Caco-2 (cell line): ENCODE measurements at regions of chr5 and their contacts with region 1.

Region 1: DNA sequence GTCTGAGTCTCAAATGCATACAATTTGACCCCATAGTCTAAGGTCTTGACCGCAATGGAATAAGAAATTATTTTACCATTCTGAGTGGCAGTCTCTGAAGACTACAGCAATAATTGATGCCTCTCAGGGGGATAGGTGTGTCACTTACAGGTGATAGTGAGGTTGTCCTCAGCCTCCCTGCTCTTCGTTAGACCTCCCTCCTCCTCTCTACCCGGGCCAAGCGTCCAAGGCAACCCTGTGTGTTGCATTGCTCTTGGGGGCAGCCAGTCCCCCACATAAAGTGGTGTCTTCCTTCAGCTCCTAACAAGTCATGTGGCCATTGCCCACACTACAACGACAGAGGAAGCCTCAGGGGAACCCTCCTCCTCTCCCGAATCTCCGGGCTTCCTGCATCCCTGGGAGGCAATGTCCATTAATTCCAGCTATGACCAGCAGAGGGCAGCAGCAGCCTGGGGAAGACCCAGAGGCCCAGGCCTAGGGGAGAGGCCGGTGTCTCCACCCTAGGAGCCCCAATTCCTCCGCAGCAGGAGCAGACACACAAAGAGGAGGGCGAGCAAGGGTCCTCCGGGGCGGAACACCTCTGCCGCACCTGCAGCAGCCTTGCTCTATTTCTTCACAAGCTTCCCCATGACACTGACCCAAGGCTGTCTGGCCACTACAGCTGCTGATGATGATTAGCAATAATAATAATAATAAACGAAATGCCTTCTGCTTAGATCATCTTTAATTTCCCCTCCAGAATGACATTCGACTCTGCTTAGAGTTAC is 134.8 kb downstream of the KCNIP1 start:
- DNase-seq: peak; percentile 69 to 80
- H3K4me3 ChIP-seq: no peak overlapping the region
- H3K4me3 Mint-ChIP-seq: no peak overlapping the region
- H3K27ac Mint-ChIP-seq: no peak overlapping the region
- H3K4me1 ChIP-seq: peaks cover 6% of the 10 kb centered on the region; the same call in 1 of the 2 replicates
- H3K4me1 Mint-ChIP-seq: peaks cover 17% of the 10 kb centered on the region
- H3K27me3 ChIP-seq: no peaks in the 10 kb centered on the region; the same call in 1 of the 2 replicates
- H3K27me3 Mint-ChIP-seq: peaks cover 21% of the 10 kb centered on the region
- CTCF ChIP-seq: peak; percentile 79 to 87

Region 2: GRCh38 chr5:170673196-170673595 is 34.6 kb after region 1 on chr5:
- CTCF ChIA-PET with region 1: no interaction called
- POLR2A ChIA-PET with region 1: no interaction called
- intact Hi-C with region 1: no loop called
- DNase-seq: no peak
- H3K4me3 ChIP-seq: no peak overlapping the region
- H3K4me3 Mint-ChIP-seq: no peak overlapping the region
- H3K27ac Mint-ChIP-seq: no peak overlapping the region
- H3K4me1 ChIP-seq: no peaks in the 10 kb centered on the region
- H3K4me1 Mint-ChIP-seq: peaks cover 2% of the 10 kb centered on the region
- H3K27me3 ChIP-seq: no peaks in the 10 kb centered on the region; the same call in none of the 2 replicates
- H3K27me3 Mint-ChIP-seq: peaks cover 29% of the 10 kb centered on the region
- CTCF ChIP-seq: no peak

Region 3: DNA sequence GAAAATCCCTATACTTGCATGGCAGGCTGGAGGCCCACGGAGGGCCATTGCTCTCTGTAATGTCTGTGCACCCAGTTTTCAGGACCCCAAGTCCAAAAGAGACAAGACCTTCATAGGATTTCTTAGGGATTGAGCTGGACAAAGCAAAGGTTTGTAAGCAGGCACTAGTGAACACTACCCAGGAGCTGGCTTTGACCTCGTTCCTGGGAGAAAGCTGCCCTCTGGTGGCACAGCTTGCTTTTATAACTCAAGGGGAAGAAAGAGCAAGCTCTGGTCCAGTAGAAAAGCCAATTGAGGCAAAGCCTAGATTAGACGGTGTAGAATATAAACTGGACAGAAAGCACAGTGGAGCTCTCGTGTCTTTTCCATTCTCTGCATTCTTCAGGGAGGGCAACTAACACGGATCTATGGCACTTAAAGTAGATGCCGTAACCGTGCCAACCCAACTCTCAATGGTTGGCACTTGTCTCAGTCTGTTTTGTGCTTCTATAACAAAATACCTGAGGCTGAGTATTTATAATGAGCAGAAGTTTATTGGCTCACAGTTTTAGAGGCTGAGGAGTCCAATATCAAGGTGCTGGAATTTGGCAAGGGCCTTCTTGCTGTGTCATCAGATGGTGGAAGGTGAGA is 152.8 kb after region 1 on chr5:
- CTCF ChIA-PET with region 1: interaction called, 23 read pairs
- POLR2A ChIA-PET with region 1: no interaction called
- intact Hi-C with region 1: loop called (anchors 1 kb)
- DNase-seq: peak; percentile 69 to 80
- H3K4me3 ChIP-seq: no peak overlapping the region
- H3K4me3 Mint-ChIP-seq: no peak overlapping the region
- H3K27ac Mint-ChIP-seq: no peak overlapping the region
- H3K4me1 ChIP-seq: no peaks in the 10 kb centered on the region
- H3K4me1 Mint-ChIP-seq: no peaks in the 10 kb centered on the region
- H3K27me3 ChIP-seq: peaks cover 2% of the 10 kb centered on the region; the same call in 1 of the 2 replicates
- H3K27me3 Mint-ChIP-seq: peaks cover 4% of the 10 kb centered on the region
- CTCF ChIP-seq: peak; percentile 77 to 78